ENCODE measurements at regions of chr10 and their contacts with region 1.

Region 1: DNA sequence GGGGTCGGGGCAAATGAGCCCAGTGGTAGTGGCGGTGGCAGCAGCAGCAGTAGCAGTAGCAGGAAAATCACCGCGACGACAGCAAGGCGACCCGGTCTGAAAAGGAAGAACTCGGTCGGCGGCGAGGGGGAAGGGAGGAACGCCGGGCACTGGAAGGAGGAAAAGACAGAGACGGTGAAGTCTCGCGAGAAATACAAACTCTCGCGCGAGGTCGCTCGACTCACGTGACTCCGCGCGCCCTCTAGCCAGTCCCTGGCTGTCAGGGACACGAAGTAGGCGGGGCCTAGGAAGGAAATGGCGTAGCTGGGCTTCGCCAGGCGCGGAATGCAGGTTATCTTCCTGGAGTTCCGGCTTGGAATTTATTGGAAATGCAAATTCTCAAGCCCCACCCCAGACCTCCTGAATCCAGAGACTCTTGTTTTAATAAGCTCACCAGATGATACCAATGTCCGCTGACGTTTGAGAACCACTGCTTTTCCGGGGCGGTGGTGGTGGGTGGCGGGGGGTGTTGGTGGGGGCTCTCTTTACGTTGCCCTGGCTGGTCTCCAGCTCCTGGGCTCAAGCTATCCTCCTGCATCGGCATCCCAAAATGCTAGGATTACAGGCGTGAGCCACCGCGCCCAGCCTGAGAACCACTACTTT is at the start of gene SMNDC1:
- DNase-seq: peak; percentile 97
- CTCF ChIP-seq: no peak

Region 2: GRCh38 chr10:109784236-109784635 is 520.7 kb before region 1 on chr10:
- CTCF ChIA-PET with region 1: no interaction called
- POLR2A ChIA-PET with region 1: no interaction called
- DNase-seq: no peak
- CTCF ChIP-seq: no peak

Region 3: GRCh38 chr10:110244550-110244949 is 60.4 kb before region 1 on chr10:
- CTCF ChIA-PET with region 1: no interaction called
- POLR2A ChIA-PET with region 1: no interaction called
- DNase-seq: no peak
- CTCF ChIP-seq: no peak

Region 4: GRCh38 chr10:110547139-110547761 is 242.3 kb after region 1 on chr10:
- CTCF ChIA-PET with region 1: interaction called, 86 read pairs
- POLR2A ChIA-PET with region 1: no interaction called
- DNase-seq: peak; percentile 72
- CTCF ChIP-seq: peak; percentile 73

Region 5: DNA sequence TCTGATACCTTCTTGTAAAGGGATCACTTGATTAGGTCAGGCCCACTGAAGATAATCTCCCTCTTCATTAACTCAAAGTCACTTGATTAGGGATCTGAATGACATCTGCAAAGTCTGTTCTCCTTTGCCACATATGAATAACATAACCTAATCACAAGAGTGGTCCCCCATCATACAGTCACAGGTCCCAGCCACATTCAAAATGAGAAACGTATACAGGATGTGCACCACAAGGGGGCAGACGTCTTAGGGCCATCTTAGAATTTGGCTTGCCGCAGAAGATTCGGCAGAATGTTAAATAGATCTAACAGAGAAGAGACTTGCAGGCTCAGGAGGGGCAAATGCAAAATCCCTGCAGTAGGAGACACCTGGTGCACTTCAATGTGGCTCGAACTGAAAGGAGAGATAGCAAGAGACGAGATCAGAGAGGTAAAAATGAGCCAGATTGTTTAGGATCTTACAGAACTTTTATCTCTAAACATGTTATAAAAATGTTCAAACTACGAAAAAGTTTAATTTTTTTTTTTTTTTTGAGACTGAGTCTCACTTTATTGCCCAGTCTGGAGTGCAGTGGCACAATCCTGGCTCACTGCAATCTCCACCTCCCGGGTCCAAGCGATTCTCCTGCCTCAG is 252.2 kb after region 1 on chr10:
- CTCF ChIA-PET with region 1: interaction called, 38 read pairs
- POLR2A ChIA-PET with region 1: no interaction called
- DNase-seq: peak; percentile 43
- CTCF ChIP-seq: peak; percentile 74

Region 6: GRCh38 chr10:110568055-110568735 is 263.3 kb after region 1 on chr10:
- CTCF ChIA-PET with region 1: interaction called, 3 read pairs
- POLR2A ChIA-PET with region 1: interaction called, 10 read pairs
- DNase-seq: no peak
- CTCF ChIP-seq: no peak

Region 7: DNA sequence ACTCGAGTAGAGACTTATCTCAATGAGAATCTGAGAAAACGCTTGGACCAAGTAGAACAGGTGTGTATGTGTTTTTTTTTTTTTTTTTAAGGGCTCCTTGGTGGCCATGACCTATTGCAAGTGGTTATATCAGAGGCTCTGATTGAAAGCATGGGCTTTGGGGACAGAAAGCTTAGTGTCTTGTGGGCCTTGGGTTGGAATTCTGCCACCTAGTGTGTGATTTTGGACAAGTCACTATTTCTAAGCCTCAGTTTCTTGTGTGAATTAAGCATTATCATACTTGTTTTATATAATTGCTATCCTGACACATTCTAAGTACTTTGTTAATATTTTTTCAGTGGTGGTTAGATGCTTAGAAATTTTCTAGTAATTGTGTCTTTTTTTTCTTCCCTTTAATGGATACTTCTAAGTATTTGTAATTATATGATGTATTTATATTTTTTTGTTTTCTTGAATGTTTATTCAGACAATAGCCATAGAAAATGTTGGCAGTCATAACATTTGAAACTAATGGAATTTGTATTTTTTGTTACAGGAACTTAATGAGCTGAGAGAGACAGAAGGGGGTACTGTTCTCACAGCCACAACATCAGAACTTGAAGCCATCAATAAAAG is 295.7 kb after region 1 on chr10:
- CTCF ChIA-PET with region 1: interaction called, 26 read pairs
- POLR2A ChIA-PET with region 1: no interaction called
- DNase-seq: no peak
- CTCF ChIP-seq: peak; percentile 52

Region 8: DNA sequence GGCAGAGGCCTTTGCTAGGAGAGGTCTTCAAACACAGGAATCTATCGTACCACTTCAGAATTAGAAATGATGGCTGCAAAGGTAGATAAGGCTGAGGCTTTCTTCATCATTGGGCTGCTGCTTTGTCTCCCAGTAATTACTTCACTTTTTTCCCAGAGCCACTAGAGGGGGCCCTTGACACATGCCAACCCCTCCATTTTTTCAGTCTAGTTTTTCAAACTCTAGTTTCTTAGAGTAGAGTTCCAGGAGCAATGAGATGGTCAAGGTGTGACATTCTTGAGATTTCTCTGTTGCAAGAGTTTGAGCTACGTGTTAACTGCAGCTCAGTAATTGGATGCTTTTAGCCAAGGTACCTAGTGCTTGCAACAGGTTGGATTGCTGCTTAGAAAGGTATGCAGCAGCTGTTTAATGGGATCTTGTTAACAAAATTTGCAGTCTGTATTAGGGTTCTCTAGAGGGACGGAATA is 305.4 kb after region 1 on chr10:
- CTCF ChIA-PET with region 1: interaction called, 10 read pairs
- POLR2A ChIA-PET with region 1: no interaction called
- DNase-seq: peak; percentile 61
- CTCF ChIP-seq: peak; percentile 69

Region 9: DNA sequence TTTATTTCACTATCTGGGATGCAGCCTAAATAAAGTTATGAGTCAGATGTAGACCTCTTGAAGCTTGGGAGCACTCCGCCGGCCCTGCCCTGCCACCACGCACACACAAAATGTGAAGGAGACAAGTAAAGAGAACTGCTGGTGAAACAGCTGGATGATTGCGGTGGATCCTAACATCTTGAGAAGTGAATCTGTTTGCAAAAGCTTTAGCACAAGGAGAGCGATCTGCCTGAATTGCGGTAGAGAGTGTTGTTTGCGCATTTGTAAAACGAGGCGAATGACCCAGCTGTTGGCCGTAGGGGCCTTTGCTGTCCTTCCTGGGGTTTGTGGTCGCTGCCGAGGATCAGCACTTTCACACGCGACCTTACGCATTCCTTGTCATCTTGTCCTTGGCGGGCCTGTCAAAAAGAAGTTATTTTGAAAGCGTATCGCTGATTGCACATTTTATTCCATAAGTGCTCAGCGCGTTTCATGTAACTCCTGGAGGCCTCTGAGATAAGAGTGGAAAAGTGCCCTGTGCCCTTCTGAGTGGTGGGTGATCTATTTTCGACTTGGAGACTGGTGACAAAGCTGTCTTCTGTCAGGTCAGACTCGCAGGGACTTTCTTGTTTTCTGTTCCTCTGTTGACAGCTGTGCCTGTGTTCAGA is 380.0 kb after region 1 on chr10:
- CTCF ChIA-PET with region 1: no interaction called
- POLR2A ChIA-PET with region 1: no interaction called
- DNase-seq: no peak
- CTCF ChIP-seq: no peak

Measured in GM10248 (cell line).